ENCODE measurements at regions of chrX and their contacts with region 1.

Region 1: GRCh38 chrX:54786962-54787361 is 11.1 kb downstream of the ITIH6 start:
- DNase-seq: no peak
- ATAC-seq: peak; percentile 87
- H3K4me3 ChIP-seq: no peak overlapping the region
- H3K27ac ChIP-seq: no peak overlapping the region
- H3K4me1 ChIP-seq: no peaks in the 10 kb centered on the region
- H3K27me3 ChIP-seq: no peaks in the 10 kb centered on the region
- CTCF ChIP-seq: peak; percentile 25 to 48 (median 45); a peak in 5 of 6 replicates
- POLR2A ChIP-seq: no peak
- RAD21 ChIP-seq: peak; percentile 65

Region 2: DNA sequence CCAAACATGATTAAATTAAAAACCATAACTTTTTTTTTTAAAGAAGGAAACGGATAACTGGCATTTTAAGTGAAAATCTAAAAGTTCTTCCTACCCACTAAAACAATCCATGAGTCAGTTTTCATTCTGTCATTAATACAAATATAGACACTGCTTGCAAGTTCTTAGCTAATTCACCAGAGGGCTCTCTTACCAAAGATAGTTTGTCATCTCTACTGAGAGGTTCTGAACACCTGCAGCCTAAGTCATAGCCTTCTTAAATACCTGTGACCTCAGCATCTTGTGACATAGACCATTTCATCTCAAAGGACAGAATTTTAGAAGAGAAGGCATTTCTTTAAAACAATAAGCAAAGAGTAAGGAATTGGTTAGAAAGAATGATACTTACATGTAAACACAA is 538.7 kb before region 1 on chrX:
- CTCF ChIA-PET with region 1: no interaction called
- POLR2A ChIA-PET with region 1: no interaction called
- RAD21 ChIA-PET with region 1: interaction called in 1 of 2 experiments, 3 read pairs
- intact Hi-C with region 1: loop called (anchors 5 kb)
- DNase-seq: peak; percentile 6
- ATAC-seq: peak; percentile 71; the same call in 1 of the 2 replicates
- H3K4me3 ChIP-seq: no peak overlapping the region
- H3K27ac ChIP-seq: no peak overlapping the region
- H3K4me1 ChIP-seq: no peaks in the 10 kb centered on the region
- H3K27me3 ChIP-seq: no peaks in the 10 kb centered on the region
- CTCF ChIP-seq: peak in 2 of 3 experiments; percentile 29 to 46; a peak in 2 of 6 replicates
- POLR2A ChIP-seq: no peak
- RAD21 ChIP-seq: peak; percentile 60

Region 3: DNA sequence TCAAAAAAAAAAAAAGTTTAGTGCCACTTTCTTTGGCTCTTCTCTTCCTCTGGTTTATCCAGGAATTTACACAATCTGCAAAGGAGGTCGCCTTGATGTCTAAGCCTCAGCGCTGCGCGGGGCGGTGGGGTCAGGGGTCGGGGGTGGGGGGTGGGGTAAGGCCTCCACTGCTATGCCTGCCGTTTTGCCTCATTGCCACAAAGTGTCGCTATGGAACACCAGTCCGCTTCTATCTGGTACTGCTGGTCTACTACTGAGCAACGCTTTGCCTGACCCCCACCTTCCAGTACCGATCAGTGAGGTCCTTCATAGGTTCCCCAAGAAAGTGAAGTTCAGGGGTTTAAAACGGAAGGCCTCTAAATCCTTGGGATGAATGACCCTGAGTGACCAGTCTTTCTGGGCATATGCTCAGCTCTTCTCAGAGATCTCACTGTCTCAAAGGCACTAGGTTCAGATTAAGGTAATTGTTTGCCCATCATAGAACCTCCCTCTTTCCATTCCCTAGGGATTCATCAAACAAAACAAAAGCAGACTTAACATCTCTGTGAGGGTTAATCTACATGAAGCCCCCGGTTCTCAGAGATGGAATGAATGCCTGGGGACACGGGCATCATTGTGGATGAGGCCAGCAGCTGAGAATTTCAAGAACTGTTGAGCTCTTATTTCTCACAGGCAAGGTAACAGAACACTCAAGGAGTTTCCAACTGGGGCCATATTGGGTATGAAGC is 363.6 kb before region 1 on chrX:
- CTCF ChIA-PET with region 1: no interaction called
- POLR2A ChIA-PET with region 1: no interaction called
- RAD21 ChIA-PET with region 1: no interaction called
- intact Hi-C with region 1: no loop called
- DNase-seq: no peak
- ATAC-seq: no peak
- H3K4me3 ChIP-seq: no peak overlapping the region
- H3K27ac ChIP-seq: no peak overlapping the region
- H3K4me1 ChIP-seq: no peaks in the 10 kb centered on the region
- H3K27me3 ChIP-seq: no peaks in the 10 kb centered on the region
- CTCF ChIP-seq: no peak
- POLR2A ChIP-seq: no peak
- RAD21 ChIP-seq: no peak; the same call in 1 of the 2 replicates

Region 4: GRCh38 chrX:54639346-54640102 is 147.4 kb before region 1 on chrX:
- CTCF ChIA-PET with region 1: interaction called, 39 read pairs
- POLR2A ChIA-PET with region 1: interaction called, 4 read pairs
- RAD21 ChIA-PET with region 1: interaction called, 4 to 8 read pairs
- intact Hi-C with region 1: loop called (anchors 1 kb)
- DNase-seq: peak; percentile 90
- ATAC-seq: peak; percentile 95
- H3K4me3 ChIP-seq: peak overlapping the region; percentile 46 to 56
- H3K27ac ChIP-seq: peak overlapping the region; percentile 91
- H3K4me1 ChIP-seq: peaks cover 15% of the 10 kb centered on the region in 2 experiments; a peak in 3 of 4 replicates
- H3K27me3 ChIP-seq: no peaks in the 10 kb centered on the region
- CTCF ChIP-seq: peak; percentile 51 to 59 (median 56); a peak in 5 of 6 replicates
- POLR2A ChIP-seq: no peak
- RAD21 ChIP-seq: peak; percentile 62

Region 5: DNA sequence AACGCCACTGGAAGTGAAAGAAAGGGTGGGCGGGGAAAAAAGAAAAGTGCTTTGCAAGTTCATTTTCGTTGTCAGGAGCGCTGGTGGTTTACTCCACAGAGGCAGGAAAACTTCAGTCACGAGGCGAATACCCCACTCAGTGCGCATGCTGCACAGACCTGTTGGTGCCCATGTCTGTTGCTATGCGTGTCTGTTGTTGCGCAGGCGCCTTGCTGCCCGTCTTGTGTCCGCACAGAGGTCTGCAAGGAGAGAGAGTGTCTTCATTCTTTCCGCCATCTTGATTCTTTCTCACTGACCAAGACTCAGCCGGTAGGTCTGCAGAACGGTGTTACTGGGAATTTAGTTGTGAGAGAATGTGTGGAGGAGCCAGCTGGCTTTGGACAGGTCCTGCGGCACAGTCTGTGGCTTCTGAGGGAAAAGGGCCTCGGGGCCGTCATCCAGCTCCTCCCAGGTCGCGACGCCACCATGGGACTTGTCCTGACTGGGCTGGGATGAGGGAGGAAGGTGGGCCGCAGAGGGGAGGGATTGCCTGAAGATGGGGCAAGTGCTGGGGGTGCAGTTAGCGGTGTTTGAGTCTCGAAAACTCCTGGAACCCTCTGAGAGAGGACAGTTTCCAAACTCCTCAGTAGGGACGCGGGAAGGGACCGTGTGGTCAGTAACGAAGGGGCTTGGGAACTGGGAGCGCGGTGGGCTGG is 302.0 kb after region 1 on chrX and contains the start of gene PAGE2:
- CTCF ChIA-PET with region 1: no interaction called
- POLR2A ChIA-PET with region 1: no interaction called
- RAD21 ChIA-PET with region 1: no interaction called
- intact Hi-C with region 1: no loop called
- DNase-seq: no peak
- ATAC-seq: no peak
- H3K4me3 ChIP-seq: no peak within 1 kb of the TSS
- H3K27ac ChIP-seq: no peak within 1 kb of the TSS
- H3K4me1 ChIP-seq: no peaks in the 10 kb centered on the region
- H3K27me3 ChIP-seq: no peaks in the 10 kb centered on the region
- CTCF ChIP-seq: no peak
- POLR2A ChIP-seq: no peak
- RAD21 ChIP-seq: no peak
- total RNA-seq, gene PAGE2: not detected

Measured in HCT116 (cell line).